Ascending aorta (tissue), 2 donors: ENCODE measurements at regions of chr13 and their contacts with region 1.

Region 1: GRCh38 chr13:102555917-102556553 is 40.8 kb upstream of the TPP2 start:
- DNase-seq: no peak
- H3K4me3 ChIP-seq: no peak overlapping the region
- H3K27ac ChIP-seq: no peak overlapping the region
- H3K4me1 ChIP-seq: no peaks in the 10 kb centered on the region
- H3K27me3 ChIP-seq: no peaks in the 10 kb centered on the region
- CTCF ChIP-seq: peak; percentile 15 to 46 (median 24)

Region 2: GRCh38 chr13:102141625-102142472 is 414.2 kb before region 1 on chr13:
- intact Hi-C with region 1: loop called (anchors 10 kb)
- DNase-seq: no peak
- H3K4me3 ChIP-seq: no peak overlapping the region
- H3K27ac ChIP-seq: no peak overlapping the region
- H3K4me1 ChIP-seq: no peaks in the 10 kb centered on the region
- H3K27me3 ChIP-seq: no peaks in the 10 kb centered on the region
- CTCF ChIP-seq: peak in 2 of 3 experiments; percentile 50 to 67